ENCODE measurements at regions of chr20 and their contacts with region 1.

Region 1: GRCh38 chr20:62926239-62927104 is at the start of gene DIDO1:
- DNase-seq: peak; percentile 97
- CTCF ChIP-seq: peak; percentile 51

Region 2: GRCh38 chr20:62907384-62908317 is 18.8 kb before region 1 on chr20:
- CTCF ChIA-PET with region 1: interaction called, 153 read pairs
- POLR2A ChIA-PET with region 1: no interaction called
- DNase-seq: no peak
- CTCF ChIP-seq: peak; percentile 33

Region 3: DNA sequence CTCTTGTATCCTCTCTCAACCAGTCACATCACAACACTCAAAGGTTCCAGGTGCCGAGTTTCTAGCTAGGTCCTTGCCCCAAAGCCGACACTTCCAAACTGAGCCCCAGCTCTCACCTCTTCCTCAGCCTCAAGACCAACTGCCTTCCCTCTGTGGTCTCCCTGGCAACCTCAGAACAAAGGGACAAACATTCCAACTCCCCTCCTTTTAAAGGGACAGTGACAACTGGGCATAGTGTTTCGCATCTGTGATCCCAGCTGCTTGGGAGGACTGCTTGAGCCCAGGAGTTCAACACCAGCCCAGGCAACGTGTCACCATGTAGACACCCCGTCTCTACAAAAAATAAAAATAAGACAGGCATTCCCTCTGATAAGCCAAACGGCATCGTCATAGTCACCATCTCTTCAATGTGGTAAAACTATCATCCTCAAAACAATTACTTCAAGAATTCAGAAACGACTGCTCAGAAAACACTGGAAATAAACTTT is 11.5 kb before region 1 on chr20:
- CTCF ChIA-PET with region 1: interaction called, 30 read pairs
- POLR2A ChIA-PET with region 1: interaction called, 5 read pairs
- DNase-seq: no peak
- CTCF ChIP-seq: no peak

Region 4: GRCh38 chr20:62937366-62938104 is 11.1 kb after region 1 on chr20:
- CTCF ChIA-PET with region 1: interaction called, 21 read pairs
- POLR2A ChIA-PET with region 1: no interaction called
- DNase-seq: peak; percentile 97
- CTCF ChIP-seq: no peak

Measured in GM10248 (cell line).